Heart left ventricle (tissue), 16 donors: ENCODE measurements at regions of chr12 and their contacts with region 1.

Region 1: DNA sequence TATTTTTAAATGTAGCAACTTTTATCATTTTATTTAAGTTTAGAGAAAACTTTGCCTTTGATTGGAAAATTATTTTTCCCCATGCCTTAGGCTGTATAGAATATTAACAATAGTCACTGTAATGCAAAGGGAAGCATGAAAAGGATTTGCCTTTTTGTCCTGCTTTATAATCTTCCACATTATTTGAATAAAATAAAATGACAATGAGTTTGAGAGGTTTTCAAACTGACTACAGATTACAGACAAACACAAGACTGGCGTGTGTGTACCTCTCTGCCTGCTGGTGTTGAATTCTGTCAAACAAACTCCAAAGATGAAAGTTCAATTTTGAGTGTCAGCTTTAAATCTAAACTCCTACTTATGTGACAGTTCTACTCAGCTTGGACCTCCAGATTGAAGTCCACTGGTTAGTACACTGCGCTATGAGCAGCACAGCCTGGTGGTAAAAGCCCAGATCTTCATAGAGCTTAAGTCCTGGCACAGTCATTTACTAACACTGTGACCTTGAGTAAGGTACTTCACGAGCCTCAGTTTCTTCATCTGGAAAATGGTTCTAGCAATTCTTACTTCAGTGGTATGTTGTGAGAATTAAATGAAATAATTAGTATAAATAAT is 98.3 kb upstream of the CPNE8 start:
- DNase-seq: no peak
- ATAC-seq: no peak
- H3K4me3 ChIP-seq: no peak overlapping the region
- H3K27ac ChIP-seq: no peak overlapping the region
- H3K4me1 ChIP-seq: no peaks in the 10 kb centered on the region
- H3K27me3 ChIP-seq: no peaks in the 10 kb centered on the region
- CTCF ChIP-seq: no peak
- POLR2A ChIP-seq: no peak

Region 2: GRCh38 chr12:39062261-39062985 is 58.8 kb after region 1 on chr12:
- intact Hi-C with region 1: loop called in 1 of 10 experiments (anchors 10 kb)
- DNase-seq: no peak
- ATAC-seq: no peak
- H3K4me3 ChIP-seq: no peak overlapping the region
- H3K27ac ChIP-seq: no peak overlapping the region
- H3K4me1 ChIP-seq: no peaks in the 10 kb centered on the region
- H3K27me3 ChIP-seq: no peaks in the 10 kb centered on the region
- CTCF ChIP-seq: no peak
- POLR2A ChIP-seq: no peak